Activated T-helper 1 cell treated with anti-CD3 and anti-CD28 coated beads, Interleukin-12 subunit alpha, Interleukin-12 subunit beta, Interleukin-2, Interleukin-4 antibody, amounts not matched to agents 30 ng/mL and 10 ng/mL and 1 ng/mL, durations not matched to agents 14 hours and 24 hours and 36 hours (primary cell): ENCODE measurements at regions of chr9 and their contacts with region 1.

Region 1: GRCh38 chr9:71806901-71807307 is 38.6 kb upstream of the CEMIP2 start:
- DNase-seq: peak; percentile 48
- H3K4me3 Mint-ChIP-seq: no peak overlapping the region
- H3K27ac Mint-ChIP-seq: no peak overlapping the region
- H3K4me1 Mint-ChIP-seq: peaks cover 4% of the 10 kb centered on the region
- H3K27me3 Mint-ChIP-seq: no peaks in the 10 kb centered on the region

Region 2: DNA sequence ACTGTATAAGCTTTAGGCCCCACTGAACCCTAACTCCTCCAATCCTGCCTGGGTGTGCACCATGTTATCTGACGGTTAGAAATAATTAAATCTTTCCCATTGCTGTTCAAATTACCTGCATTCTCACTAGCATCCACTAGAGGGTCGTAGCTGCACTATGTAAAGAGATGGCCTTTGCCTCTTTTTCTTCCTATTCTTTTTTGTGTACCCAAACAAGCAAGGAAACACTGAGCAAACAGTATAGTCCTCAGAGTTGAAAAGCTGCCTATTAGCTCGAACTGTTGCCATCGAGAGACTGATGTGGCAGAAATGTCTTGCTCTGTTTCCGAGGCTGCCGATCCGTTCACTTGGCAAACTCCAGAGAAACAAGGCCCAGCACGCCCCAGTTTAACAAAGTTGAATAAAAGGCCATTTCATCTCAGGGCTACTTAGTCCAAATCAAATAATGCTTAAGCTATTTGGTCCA is 521.7 kb before region 1 on chr9:
- intact Hi-C with region 1: loop called (anchors 2 kb)
- DNase-seq: peak; percentile 10
- H3K4me3 Mint-ChIP-seq: no peak overlapping the region
- H3K27ac Mint-ChIP-seq: no peak overlapping the region
- H3K4me1 Mint-ChIP-seq: no peaks in the 10 kb centered on the region
- H3K27me3 Mint-ChIP-seq: peaks cover 3% of the 10 kb centered on the region

Region 3: DNA sequence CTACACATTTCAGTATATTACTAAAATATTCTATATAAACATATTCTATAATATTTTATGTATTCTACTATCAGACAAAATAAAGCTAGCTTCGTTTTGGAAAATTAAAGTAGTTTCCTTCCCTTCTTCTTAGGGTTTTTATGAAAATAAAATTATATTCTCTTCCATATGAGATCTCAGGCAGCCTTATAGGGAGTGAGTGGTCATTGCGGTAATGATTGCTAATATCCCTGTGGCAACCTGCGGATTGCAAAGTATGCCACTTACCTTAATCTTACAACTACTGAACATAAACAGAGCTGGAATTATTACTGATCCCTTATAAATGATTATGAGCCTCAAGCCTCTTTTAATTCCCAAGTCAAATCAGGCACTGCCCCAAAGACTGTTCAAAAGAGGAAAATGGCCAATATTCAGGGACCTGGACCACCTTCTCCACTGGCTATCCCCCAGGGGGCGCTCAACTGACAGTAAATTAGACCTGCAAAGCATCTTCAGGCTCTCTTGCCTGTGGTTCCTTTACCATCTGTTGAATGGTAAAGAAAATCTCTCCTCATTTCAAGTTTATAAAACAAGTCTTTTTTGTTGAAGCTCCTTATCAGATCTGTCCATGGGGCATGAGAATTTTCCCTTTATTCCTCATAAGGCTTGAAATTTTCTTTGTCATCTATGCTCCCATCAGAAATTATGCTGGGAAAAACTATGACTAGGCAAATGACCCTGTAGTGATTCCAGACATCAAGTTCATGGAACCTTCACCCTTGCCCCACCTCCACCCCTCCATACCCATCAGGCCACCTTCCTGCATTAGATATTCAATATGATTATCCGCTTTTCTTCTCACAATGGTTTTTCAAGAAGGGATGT is 202.5 kb before region 1 on chr9:
- intact Hi-C with region 1: loop called (anchors 1 kb)
- DNase-seq: peak; percentile 65
- H3K4me3 Mint-ChIP-seq: no peak overlapping the region
- H3K27ac Mint-ChIP-seq: no peak overlapping the region
- H3K4me1 Mint-ChIP-seq: no peaks in the 10 kb centered on the region
- H3K27me3 Mint-ChIP-seq: peaks cover 9% of the 10 kb centered on the region

Region 4: DNA sequence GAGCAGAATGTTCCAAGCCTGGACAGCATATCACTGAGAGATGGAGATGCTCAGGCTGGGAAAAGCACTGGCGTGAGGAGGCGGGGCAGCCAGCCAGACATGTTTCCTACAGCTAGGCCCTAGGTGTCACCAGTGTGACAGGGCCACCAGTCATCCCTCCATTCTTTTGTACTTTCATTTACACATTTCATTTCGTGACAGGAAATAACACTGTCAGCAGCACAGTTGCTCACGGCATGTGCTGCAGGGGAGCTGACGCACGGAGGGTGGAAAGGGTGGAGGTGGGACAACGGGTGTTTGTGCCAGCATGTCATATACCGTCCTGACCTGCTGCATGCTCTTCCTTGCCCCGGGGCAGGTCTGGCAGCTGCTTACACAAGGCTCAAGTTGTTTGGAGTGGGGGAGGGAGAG is 23.8 kb before region 1 on chr9:
- intact Hi-C with region 1: loop called (anchors 1 kb)
- DNase-seq: peak; percentile 80
- H3K4me3 Mint-ChIP-seq: peak overlapping the region; percentile 63
- H3K27ac Mint-ChIP-seq: peak overlapping the region; percentile 93
- H3K4me1 Mint-ChIP-seq: peaks cover 42% of the 10 kb centered on the region
- H3K27me3 Mint-ChIP-seq: peaks cover 2% of the 10 kb centered on the region

Region 5: DNA sequence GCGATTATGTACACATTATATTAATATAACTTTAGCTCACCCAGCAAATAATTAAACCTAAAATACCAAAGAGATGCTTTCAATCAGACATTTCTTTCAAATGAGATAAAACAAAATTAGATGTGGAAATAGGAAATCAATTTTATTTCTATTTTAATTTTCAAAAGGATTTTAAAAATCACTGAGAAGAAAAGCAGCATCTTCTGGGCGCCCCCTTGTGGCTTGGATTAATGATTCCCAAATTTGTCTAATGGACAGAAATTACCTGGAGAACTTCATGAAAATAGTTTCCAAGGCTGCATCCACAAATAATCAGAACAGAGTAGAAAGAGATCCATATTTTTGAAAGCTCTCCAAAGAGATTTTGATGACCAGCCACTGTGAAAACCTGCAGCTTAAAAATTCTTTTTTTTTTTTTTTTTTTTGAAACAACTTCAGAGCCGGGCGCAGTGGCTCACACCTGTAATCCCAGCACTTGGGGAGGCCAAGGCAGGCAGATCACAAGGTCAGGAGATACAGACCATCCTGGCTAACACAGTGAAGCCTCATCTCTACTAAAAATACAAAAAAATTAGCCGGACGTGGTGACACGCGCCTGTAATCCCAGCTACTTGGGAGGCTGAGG is 12.3 kb after region 1 on chr9:
- intact Hi-C with region 1: no loop called
- DNase-seq: no peak
- H3K4me3 Mint-ChIP-seq: no peak overlapping the region
- H3K27ac Mint-ChIP-seq: no peak overlapping the region
- H3K4me1 Mint-ChIP-seq: peaks cover 17% of the 10 kb centered on the region
- H3K27me3 Mint-ChIP-seq: peaks cover 2% of the 10 kb centered on the region

Region 6: DNA sequence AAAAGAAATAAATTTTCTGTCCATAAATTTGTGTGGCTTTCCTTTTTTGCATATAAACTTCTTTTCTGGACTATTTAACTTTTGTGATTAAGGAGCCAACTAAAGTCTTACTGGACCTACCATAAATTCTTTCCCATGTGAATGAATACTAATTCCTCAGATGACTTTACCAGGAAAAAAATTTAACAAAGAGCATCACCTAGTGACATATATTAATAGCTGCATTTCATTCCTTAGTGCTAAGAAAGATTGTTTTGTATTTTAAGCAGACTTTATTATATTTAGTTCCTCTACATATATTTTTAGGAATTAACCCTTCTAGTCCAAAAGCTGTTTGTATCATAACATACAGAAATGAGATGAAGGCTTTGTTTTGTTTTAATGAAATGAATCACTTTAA is 168.9 kb after region 1 on chr9:
- intact Hi-C with region 1: loop called (anchors 1 kb)
- DNase-seq: no peak
- H3K4me3 Mint-ChIP-seq: no peak overlapping the region
- H3K27ac Mint-ChIP-seq: no peak overlapping the region
- H3K4me1 Mint-ChIP-seq: no peaks in the 10 kb centered on the region
- H3K27me3 Mint-ChIP-seq: no peaks in the 10 kb centered on the region

Region 7: DNA sequence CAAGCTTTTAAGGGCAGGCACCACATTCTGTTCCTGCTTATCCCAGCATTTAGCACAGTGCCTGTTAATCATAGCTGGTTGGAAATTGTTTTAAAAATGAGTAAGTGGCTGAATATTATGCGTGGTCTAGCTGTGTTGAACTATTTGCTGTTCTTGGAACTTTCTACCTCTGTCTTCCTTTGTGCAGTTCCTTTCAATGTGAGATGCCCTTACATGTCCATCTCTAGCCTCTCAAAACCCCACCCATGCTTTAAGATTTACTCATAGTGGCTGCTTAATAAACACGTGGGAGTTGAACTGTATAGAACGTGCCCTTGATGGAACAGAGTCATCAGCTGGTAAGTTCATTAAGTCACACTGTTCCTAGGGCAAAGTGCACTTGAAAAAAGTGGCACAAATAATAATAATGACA is 219.0 kb after region 1 on chr9:
- intact Hi-C with region 1: loop called (anchors 1 kb)
- DNase-seq: no peak
- H3K4me3 Mint-ChIP-seq: no peak overlapping the region
- H3K27ac Mint-ChIP-seq: no peak overlapping the region
- H3K4me1 Mint-ChIP-seq: peaks cover 5% of the 10 kb centered on the region
- H3K27me3 Mint-ChIP-seq: no peaks in the 10 kb centered on the region

Region 8: DNA sequence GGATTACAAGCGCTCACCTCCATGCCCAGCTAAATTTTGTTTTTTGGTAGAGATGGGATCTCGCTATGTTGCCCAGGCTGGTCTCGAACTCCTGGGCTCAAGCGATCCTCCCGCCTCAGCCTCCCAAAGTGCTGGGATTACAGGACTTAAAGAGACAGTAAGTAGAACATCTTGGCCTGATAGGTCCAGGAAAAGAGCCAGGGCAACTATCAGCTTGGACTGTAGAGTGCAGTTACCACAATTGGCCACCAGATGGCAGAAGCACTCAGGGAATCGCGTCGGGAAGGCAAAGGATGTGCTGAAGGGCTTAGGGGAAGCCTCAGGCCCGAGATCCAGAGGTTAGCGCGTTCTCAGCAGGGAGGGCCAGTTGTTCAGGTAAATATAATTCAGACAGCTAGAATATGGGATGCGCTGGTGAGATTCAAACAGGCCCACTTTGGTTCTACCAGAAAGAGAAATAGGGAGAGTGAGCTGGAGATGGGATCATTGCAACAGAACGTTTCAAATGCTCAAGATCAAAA is 232.0 kb after region 1 on chr9:
- intact Hi-C with region 1: no loop called
- DNase-seq: peak; percentile 36
- H3K4me3 Mint-ChIP-seq: no peak overlapping the region
- H3K27ac Mint-ChIP-seq: no peak overlapping the region
- H3K4me1 Mint-ChIP-seq: peaks cover 6% of the 10 kb centered on the region
- H3K27me3 Mint-ChIP-seq: peaks cover 11% of the 10 kb centered on the region

Region 9: GRCh38 chr9:72271613-72272478 is 464.9 kb after region 1 on chr9:
- intact Hi-C with region 1: loop called (anchors 2 kb)
- DNase-seq: no peak
- H3K4me3 Mint-ChIP-seq: no peak overlapping the region
- H3K27ac Mint-ChIP-seq: no peak overlapping the region
- H3K4me1 Mint-ChIP-seq: no peaks in the 10 kb centered on the region
- H3K27me3 Mint-ChIP-seq: peaks cover 15% of the 10 kb centered on the region